Mammary epithelial cell (primary cell): ENCODE measurements at regions of chr2 and their contacts with region 1.

Region 1: DNA sequence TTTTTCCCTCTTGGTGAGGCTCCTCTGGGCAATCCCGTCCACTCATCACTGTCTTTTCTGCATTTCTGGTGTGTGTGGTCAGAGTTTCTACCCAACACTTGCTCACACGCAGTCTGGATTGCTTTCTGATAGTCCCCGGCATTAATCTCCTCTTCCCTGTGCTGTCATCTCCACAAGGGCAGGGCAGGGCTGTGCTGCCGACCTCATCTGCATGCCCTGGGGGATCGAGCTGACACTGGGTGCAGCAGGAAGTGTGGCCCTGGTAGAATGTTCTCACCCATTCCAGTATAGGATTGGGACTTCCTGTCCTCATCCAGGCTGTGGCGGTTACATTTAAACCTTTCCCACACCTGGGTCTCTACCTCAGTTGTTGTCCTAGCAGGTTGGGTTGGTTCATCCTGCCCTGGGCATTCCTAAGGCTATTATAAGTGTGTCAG is 80.0 kb upstream of the FAM136A start:
- DNase-seq: peak; percentile 98
- H3K4me3 ChIP-seq: no peak overlapping the region
- H3K27ac ChIP-seq: peak overlapping the region; percentile 96
- H3K4me1 ChIP-seq: peaks cover 36% of the 10 kb centered on the region
- H3K27me3 ChIP-seq: no peaks in the 10 kb centered on the region
- CTCF ChIP-seq: no peak

Region 2: GRCh38 chr2:70328921-70329561 is 52.8 kb before region 1 on chr2:
- CTCF ChIA-PET with region 1: no interaction called
- dilution Hi-C with region 1: loop called (anchors 5 kb)
- in situ Hi-C with region 1: no loop called
- intact Hi-C with region 1: no loop called
- DNase-seq: peak; percentile 97
- H3K4me3 ChIP-seq: no peak overlapping the region
- H3K27ac ChIP-seq: peak overlapping the region; percentile 84
- H3K4me1 ChIP-seq: peaks cover 15% of the 10 kb centered on the region
- H3K27me3 ChIP-seq: no peaks in the 10 kb centered on the region
- CTCF ChIP-seq: no peak

Region 3: DNA sequence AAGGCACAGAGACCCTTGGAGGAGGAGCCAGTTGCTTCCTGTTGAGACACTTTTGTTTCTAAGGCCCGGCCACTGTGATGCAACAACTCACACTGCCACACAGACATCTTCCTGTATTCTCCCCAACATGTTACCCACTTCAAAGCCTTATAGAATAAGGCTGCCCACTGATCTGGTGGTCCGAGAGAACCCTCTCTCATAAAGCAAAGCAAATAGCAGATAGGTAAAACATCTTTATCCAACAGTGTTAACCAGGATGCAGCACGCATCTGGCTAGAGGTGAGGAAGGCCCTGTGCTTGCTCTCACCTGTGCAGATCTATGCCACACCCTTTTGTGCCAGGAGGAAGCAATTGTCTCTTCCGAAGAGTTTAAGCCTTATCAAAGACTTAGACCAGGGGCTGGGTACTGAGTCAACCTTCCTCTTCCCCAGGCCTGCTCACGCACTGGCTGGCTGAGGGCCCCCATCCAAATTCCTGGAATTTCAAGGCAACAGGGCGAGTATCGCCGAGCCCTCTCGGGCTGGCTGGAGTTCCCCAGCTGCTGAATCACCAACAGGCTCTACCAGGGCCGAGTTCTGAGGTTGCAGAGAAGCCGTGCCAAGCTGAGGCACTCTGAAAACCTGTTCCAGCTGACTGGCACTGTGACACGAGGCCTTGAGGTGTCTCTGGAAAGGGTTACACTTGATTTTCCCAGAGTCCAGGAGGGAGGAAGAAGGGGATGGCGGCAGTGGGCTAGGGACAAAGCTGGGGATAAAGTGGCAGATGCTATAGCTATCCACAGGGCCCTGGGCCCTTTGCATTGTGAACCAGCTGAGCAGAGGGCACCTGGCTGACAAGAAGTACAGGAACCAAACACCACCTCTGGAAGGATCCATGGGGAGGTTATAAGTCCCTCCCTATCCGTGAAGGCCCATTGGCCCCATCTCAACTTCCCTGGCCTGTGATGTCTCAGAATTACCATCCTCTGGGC is 142.4 kb after region 1 on chr2:
- CTCF ChIA-PET with region 1: no interaction called
- dilution Hi-C with region 1: no loop called
- in situ Hi-C with region 1: no loop called
- intact Hi-C with region 1: loop called (anchors 2 kb)
- DNase-seq: peak; percentile 99
- H3K4me3 ChIP-seq: peak overlapping the region in 1 of 3 experiments; percentile 5
- H3K27ac ChIP-seq: peak overlapping the region; percentile 97
- H3K4me1 ChIP-seq: peaks cover 62% of the 10 kb centered on the region
- H3K27me3 ChIP-seq: no peaks in the 10 kb centered on the region
- CTCF ChIP-seq: no peak